Common myeloid progenitor, CD34-positive (primary cell): ENCODE measurements at regions of chr17 and their contacts with region 1.

Region 1: GRCh38 chr17:42438600-42439567 is 15.8 kb upstream of the CAVIN1 start:
- DNase-seq: peak in 2 of 3 donors; percentile 62 to 64
- H3K4me3 ChIP-seq: no peak overlapping the region
- H3K27ac ChIP-seq: no peak overlapping the region
- H3K4me1 ChIP-seq: peaks cover 0 to 18% (median 4%) of the 10 kb centered on the region in 4 experiments
- H3K27me3 ChIP-seq: no peaks in the 10 kb centered on the region

Region 2: GRCh38 chr17:42422958-42423712 is 15.7 kb before region 1 on chr17 and contains the start of gene CAVIN1:
- CTCF ChIA-PET with region 1: interaction called, 16 read pairs
- POLR2A ChIA-PET with region 1: interaction called, 3 read pairs
- DNase-seq: peak; percentile 68 to 71 (median 71)
- H3K4me3 ChIP-seq: peak within 1 kb of the TSS; percentile 66 to 93 (median 83)
- H3K27ac ChIP-seq: peak within 1 kb of the TSS in 1 of 2 experiments; percentile 66
- H3K4me1 ChIP-seq: peaks cover 0 to 45% (median 41%) of the 10 kb centered on the region in 4 experiments
- H3K27me3 ChIP-seq: peaks cover 0 to 3% (median 0%) of the 10 kb centered on the region in 5 experiments

Region 3: DNA sequence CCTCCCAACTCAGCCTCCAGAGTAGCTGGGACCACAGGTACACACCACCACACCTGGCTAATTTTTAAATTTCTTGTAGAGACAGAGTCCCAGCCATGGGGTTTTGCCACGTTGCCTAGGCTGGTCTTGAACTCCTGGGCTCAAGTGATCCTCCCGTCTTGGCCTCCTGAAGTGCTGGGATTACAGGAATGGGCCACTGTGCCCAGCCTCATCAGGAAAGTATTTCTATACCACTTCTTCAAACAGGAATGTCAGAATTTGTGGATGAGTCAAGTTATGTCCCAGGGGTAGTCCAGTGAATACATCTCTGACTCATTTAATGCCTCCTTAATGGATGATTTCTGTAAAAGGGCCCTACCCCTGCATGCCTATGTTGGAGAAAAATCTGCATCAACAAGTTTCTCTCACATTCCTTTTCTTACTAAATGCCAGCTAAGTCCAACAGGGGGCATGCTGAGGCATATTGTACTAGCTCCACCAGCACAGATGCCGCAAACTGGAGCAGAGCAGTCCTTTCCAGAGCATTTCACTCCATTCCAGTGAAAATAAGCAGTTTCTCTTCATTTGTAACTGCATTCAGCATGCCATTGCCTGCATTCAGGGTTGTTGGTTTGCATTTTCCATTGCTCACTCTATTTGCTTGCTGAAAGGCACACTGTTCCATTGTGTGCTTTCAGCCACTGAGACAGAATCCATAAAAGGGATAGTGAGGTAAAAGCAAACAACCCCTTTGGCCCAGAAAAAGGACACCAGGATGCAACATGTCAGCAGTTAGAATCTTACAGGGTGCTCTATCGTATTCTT is 10.5 kb before region 1 on chr17:
- CTCF ChIA-PET with region 1: interaction called, 16 read pairs
- POLR2A ChIA-PET with region 1: no interaction called
- DNase-seq: peak; percentile 66 to 85 (median 80)
- H3K4me3 ChIP-seq: no peak overlapping the region
- H3K27ac ChIP-seq: no peak overlapping the region
- H3K4me1 ChIP-seq: peaks cover 0 to 7% (median 3%) of the 10 kb centered on the region in 4 experiments
- H3K27me3 ChIP-seq: no peaks in the 10 kb centered on the region

Region 4: DNA sequence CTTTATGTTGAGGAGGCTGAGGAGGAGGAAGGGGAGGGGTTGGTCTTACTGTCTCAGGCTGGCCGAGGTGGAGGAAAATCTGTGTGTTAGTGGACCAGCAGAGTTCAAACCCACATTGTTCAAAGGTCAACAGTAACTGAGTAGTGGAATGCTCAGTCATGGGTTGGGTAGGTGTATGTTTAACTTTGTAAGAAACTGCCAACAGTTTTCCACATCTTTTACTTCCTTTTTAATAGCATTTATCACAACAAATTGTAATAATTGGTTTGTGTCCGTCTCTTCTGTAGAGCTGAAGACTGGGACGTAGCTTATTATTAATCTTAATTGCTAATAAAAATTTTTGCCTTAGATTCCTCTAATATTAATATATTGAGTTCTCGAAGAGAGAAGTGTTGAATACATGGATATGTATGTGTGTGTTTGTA is 25.1 kb after region 1 on chr17:
- CTCF ChIA-PET with region 1: interaction called, 40 read pairs
- POLR2A ChIA-PET with region 1: no interaction called
- DNase-seq: no peak
- H3K4me3 ChIP-seq: no peak overlapping the region
- H3K27ac ChIP-seq: no peak overlapping the region
- H3K4me1 ChIP-seq: peaks cover 19 to 22% (median 21%) of the 10 kb centered on the region in 4 experiments
- H3K27me3 ChIP-seq: no peaks in the 10 kb centered on the region

Region 5: DNA sequence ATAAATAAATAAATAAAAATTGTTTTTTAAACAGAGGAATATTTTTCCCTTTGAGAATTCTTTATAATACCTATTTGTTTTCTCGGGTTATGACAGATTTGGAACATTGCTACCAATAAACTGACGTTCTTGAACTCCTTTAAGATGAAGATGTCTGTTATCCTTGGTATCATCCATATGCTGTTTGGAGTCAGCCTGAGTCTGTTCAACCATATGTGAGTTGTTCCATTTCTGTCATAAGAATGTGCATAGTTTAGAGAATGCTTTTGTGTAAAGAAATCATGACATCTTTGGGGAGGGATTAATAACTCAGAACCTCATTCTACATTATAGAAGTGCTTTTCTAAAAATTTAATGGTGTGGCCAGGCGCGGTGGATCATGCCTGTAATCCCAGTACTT is 59.9 kb after region 1 on chr17:
- CTCF ChIA-PET with region 1: no interaction called
- POLR2A ChIA-PET with region 1: no interaction called
- DNase-seq: no peak
- H3K4me3 ChIP-seq: no peak overlapping the region
- H3K27ac ChIP-seq: no peak overlapping the region
- H3K4me1 ChIP-seq: peaks cover 0 to 14% (median 11%) of the 10 kb centered on the region in 4 experiments
- H3K27me3 ChIP-seq: no peaks in the 10 kb centered on the region